ENCODE measurements at regions of chr2 and their contacts with region 1.

Region 1: DNA sequence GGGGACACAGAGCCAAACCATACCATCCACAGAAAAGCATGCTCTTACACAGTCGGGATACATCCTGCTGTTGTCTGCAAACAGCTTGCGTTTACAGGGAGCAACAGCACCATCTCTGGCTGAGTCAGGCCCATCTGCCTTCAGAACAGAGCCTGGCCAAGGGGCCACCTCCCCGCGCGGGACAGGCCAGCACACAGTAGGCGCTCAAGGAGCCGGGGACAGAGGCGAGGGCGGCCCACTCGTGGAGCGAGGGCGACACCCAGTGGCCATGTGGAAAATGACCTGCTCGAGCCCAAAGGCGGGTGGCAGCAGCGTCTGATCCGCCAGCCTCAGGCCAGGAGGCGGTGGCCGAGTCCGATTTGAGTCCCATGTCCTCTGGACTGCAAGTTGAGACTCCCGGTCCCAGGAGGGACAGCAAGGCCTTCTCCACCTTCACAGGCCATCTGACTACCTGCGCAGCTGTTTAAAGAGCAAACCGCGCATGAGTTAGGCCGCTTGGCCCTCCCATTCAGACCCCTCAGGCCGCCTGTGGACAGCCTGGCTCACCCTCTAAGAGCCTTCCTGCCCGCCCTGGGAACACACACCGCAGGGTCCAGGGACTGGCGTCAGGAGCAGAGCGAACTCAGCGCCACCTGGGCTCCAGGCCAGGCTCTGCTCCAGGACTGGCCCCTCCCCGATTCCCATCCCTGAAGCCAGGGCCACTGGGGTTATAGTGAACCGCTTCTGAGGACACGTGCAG is 38.3 kb downstream of the TTC32 start:
- DNase-seq: peak; percentile 58 to 70 (median 61)
- H3K4me3 ChIP-seq: no peak overlapping the region
- H3K4me3 Mint-ChIP-seq: no peak overlapping the region
- H3K27ac ChIP-seq: no peak overlapping the region
- H3K27ac Mint-ChIP-seq: peak overlapping the region in 1 of 7 donors; percentile 67
- H3K4me1 ChIP-seq: peaks cover 13% of the 10 kb centered on the region
- H3K4me1 Mint-ChIP-seq: peaks cover 4 to 18% (median 8%) of the 10 kb centered on the region in 4 donors
- H3K27me3 ChIP-seq: no peaks in the 10 kb centered on the region
- H3K27me3 Mint-ChIP-seq: peaks cover 1 to 5% of the 10 kb centered on the region in 2 donors

Region 2: GRCh38 chr2:18387441-18388206 is 1475.8 kb before region 1 on chr2:
- CTCF ChIA-PET with region 1: interaction called, 10 read pairs
- POLR2A ChIA-PET with region 1: no interaction called
- intact Hi-C with region 1: loop called (anchors 1 kb)
- DNase-seq: peak; percentile 41 to 52 (median 50)
- H3K4me3 ChIP-seq: no peak overlapping the region
- H3K4me3 Mint-ChIP-seq: no peak overlapping the region
- H3K27ac ChIP-seq: no peak overlapping the region
- H3K27ac Mint-ChIP-seq: no peak overlapping the region
- H3K4me1 ChIP-seq: no peaks in the 10 kb centered on the region
- H3K4me1 Mint-ChIP-seq: peaks cover 0 to 2% (median 0%) of the 10 kb centered on the region in 4 donors
- H3K27me3 ChIP-seq: no peaks in the 10 kb centered on the region
- H3K27me3 Mint-ChIP-seq: peaks cover 2 to 3% of the 10 kb centered on the region in 2 donors

Region 3: GRCh38 chr2:18520451-18521425 is 1342.7 kb before region 1 on chr2:
- CTCF ChIA-PET with region 1: interaction called, 151 read pairs
- POLR2A ChIA-PET with region 1: interaction called, 3 read pairs
- intact Hi-C with region 1: no loop called
- DNase-seq: peak; percentile 56 to 67 (median 62)
- H3K4me3 ChIP-seq: no peak overlapping the region
- H3K4me3 Mint-ChIP-seq: no peak overlapping the region
- H3K27ac ChIP-seq: no peak overlapping the region
- H3K27ac Mint-ChIP-seq: no peak overlapping the region
- H3K4me1 ChIP-seq: no peaks in the 10 kb centered on the region
- H3K4me1 Mint-ChIP-seq: no peaks in the 10 kb centered on the region
- H3K27me3 ChIP-seq: peaks cover 4% of the 10 kb centered on the region
- H3K27me3 Mint-ChIP-seq: peaks cover 14% of the 10 kb centered on the region in 2 donors

Region 4: GRCh38 chr2:18749912-18750526 is 1113.5 kb before region 1 on chr2:
- CTCF ChIA-PET with region 1: interaction called, 7 read pairs
- POLR2A ChIA-PET with region 1: no interaction called
- intact Hi-C with region 1: loop called (anchors 1 kb)
- DNase-seq: peak in 4 of 5 donors; percentile 5 to 24 (median 14)
- H3K4me3 ChIP-seq: no peak overlapping the region
- H3K4me3 Mint-ChIP-seq: no peak overlapping the region
- H3K27ac ChIP-seq: no peak overlapping the region
- H3K27ac Mint-ChIP-seq: no peak overlapping the region
- H3K4me1 ChIP-seq: no peaks in the 10 kb centered on the region
- H3K4me1 Mint-ChIP-seq: no peaks in the 10 kb centered on the region
- H3K27me3 ChIP-seq: no peaks in the 10 kb centered on the region
- H3K27me3 Mint-ChIP-seq: no peaks in the 10 kb centered on the region

Measured in CD4-positive, alpha-beta memory T cell (primary cell).